Activated CD8-positive, alpha-beta T cell treated with anti-CD3 and anti-CD28 coated beads, Interleukin-2, amount 10 ng/mL, durations not matched to agents 7 days and 5 days (primary cell): ENCODE measurements at regions of chr5 and their contacts with region 1.

Region 1: GRCh38 chr5:163347671-163348070 is 89.7 kb upstream of the CCNG1 start:
- DNase-seq: peak; percentile 66
- ATAC-seq: peak; percentile 60
- H3K4me3 Mint-ChIP-seq: no peak overlapping the region
- H3K27ac Mint-ChIP-seq: no peak overlapping the region
- H3K4me1 Mint-ChIP-seq: no peaks in the 10 kb centered on the region
- H3K27me3 Mint-ChIP-seq: no peaks in the 10 kb centered on the region

Region 2: GRCh38 chr5:163306421-163306820 is 41.2 kb before region 1 on chr5:
- CTCF ChIA-PET with region 1: interaction called, 10 read pairs
- POLR2A ChIA-PET with region 1: no interaction called
- DNase-seq: no peak
- ATAC-seq: no peak
- H3K4me3 Mint-ChIP-seq: no peak overlapping the region
- H3K27ac Mint-ChIP-seq: no peak overlapping the region
- H3K4me1 Mint-ChIP-seq: no peaks in the 10 kb centered on the region
- H3K27me3 Mint-ChIP-seq: no peaks in the 10 kb centered on the region

Region 3: GRCh38 chr5:163552536-163552935 is 204.9 kb after region 1 on chr5:
- CTCF ChIA-PET with region 1: no interaction called
- POLR2A ChIA-PET with region 1: no interaction called
- DNase-seq: no peak
- ATAC-seq: no peak
- H3K4me3 Mint-ChIP-seq: no peak overlapping the region
- H3K27ac Mint-ChIP-seq: no peak overlapping the region
- H3K4me1 Mint-ChIP-seq: no peaks in the 10 kb centered on the region
- H3K27me3 Mint-ChIP-seq: peaks cover 10% of the 10 kb centered on the region